H1 (cell line): ENCODE measurements at regions of chr19 and their contacts with region 1.

Region 1: GRCh38 chr19:1592755-1593500 is at the start of gene MBD3:
- DNase-seq: peak; percentile 88 to 93
- H3K4me3 ChIP-seq: peak within 1 kb of the TSS; percentile 82 to 93 (median 90)
- H3K27ac ChIP-seq: peak within 1 kb of the TSS; percentile 98
- H3K4me1 ChIP-seq: peaks cover 0 to 8% (median 6%) of the 10 kb centered on the region in 4 experiments; a peak in 6 of 7 replicates
- H3K27me3 ChIP-seq: no peaks in the 10 kb centered on the region
- CTCF ChIP-seq: no peak
- EP300 ChIP-seq: peak in 1 of 2 experiments; percentile 95; a peak in 1 of 3 replicates
- POLR2A ChIP-seq: peak in 1 of 2 experiments; percentile 46; a peak in 1 of 3 replicates
- RAD21 ChIP-seq: no peak
- total RNA-seq, gene MBD3: 110 and 115 TPM in 2 replicates

Region 2: DNA sequence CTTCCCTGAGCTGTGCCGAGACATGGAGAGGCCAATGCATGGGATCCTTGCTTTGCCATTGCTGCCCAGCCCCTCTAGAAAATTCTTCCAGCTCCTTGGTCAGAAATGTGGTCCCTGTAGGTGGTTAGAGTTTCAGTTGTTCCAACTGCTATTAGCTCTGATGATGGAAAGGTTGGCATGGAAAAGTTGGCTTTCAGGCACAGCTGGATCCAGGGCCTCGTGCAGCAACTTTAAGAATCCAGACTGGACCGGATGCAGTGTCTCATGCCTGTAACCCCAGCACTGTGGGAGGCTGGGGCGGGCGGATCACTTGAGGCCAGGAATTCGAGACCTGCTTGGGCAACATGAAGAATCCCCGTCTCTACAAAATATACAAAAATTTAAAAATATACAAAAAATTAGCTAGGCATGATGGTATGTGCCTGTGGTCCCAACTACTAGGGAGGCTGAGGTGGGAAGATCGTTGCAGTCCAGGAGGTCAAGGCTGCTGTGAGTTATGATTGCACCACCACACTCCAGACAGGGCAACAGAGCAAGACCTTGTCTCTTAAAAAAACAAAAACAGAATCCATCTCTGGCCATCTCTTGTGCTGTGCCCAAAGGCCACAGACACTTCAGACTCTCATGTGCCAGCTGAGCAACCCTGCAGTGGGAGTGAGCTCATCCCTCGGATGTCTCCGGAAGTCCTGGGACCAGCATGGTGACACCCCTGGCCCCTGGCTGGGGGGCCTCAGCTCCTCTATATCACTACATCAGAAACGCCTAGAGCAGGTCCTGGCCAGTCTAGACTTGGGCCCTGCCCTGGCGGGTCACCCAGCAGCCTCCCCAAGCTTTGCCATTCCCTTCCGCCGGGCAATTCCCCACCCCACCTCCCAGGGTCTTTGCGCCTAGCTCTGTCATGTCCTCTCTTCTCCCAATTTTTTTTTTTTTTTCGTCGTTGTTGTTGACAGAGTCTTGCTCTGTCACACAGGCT is 41.6 kb before region 1 on chr19:
- CTCF ChIA-PET with region 1: interaction called, 19 read pairs
- POLR2A ChIA-PET with region 1: interaction called, 11 read pairs
- DNase-seq: no peak
- H3K4me3 ChIP-seq: no peak overlapping the region
- H3K27ac ChIP-seq: no peak overlapping the region
- H3K4me1 ChIP-seq: no peaks in the 10 kb centered on the region
- H3K27me3 ChIP-seq: no peaks in the 10 kb centered on the region
- CTCF ChIP-seq: no peak
- EP300 ChIP-seq: no peak
- POLR2A ChIP-seq: no peak
- RAD21 ChIP-seq: no peak

Region 3: GRCh38 chr19:1577090-1577928 is 15.6 kb before region 1 on chr19:
- CTCF ChIA-PET with region 1: interaction called, 25 read pairs
- POLR2A ChIA-PET with region 1: interaction called, 148 read pairs
- DNase-seq: no peak
- H3K4me3 ChIP-seq: no peak overlapping the region
- H3K27ac ChIP-seq: no peak overlapping the region
- H3K4me1 ChIP-seq: no peaks in the 10 kb centered on the region
- H3K27me3 ChIP-seq: no peaks in the 10 kb centered on the region
- CTCF ChIP-seq: no peak
- EP300 ChIP-seq: no peak
- POLR2A ChIP-seq: no peak
- RAD21 ChIP-seq: no peak

Region 4: GRCh38 chr19:1605236-1606137 is 12.6 kb after region 1 on chr19 and contains the start of gene UQCR11:
- CTCF ChIA-PET with region 1: interaction called, 6 read pairs
- POLR2A ChIA-PET with region 1: interaction called, 38 read pairs
- DNase-seq: peak; percentile 79 to 90
- H3K4me3 ChIP-seq: peak within 1 kb of the TSS; percentile 64 to 86 (median 72)
- H3K27ac ChIP-seq: peak within 1 kb of the TSS; percentile 82
- H3K4me1 ChIP-seq: peaks cover 0 to 7% (median 3%) of the 10 kb centered on the region in 4 experiments; a peak in 6 of 7 replicates
- H3K27me3 ChIP-seq: no peaks in the 10 kb centered on the region
- CTCF ChIP-seq: peak; percentile 45 to 72 (median 50); a peak in 3 of 4 replicates
- EP300 ChIP-seq: no peak
- POLR2A ChIP-seq: peak in 1 of 2 experiments; percentile 49; a peak in 2 of 3 replicates
- RAD21 ChIP-seq: peak; percentile 66 to 73
- total RNA-seq, gene UQCR11: 162 and 179 TPM in 2 replicates

Region 5: DNA sequence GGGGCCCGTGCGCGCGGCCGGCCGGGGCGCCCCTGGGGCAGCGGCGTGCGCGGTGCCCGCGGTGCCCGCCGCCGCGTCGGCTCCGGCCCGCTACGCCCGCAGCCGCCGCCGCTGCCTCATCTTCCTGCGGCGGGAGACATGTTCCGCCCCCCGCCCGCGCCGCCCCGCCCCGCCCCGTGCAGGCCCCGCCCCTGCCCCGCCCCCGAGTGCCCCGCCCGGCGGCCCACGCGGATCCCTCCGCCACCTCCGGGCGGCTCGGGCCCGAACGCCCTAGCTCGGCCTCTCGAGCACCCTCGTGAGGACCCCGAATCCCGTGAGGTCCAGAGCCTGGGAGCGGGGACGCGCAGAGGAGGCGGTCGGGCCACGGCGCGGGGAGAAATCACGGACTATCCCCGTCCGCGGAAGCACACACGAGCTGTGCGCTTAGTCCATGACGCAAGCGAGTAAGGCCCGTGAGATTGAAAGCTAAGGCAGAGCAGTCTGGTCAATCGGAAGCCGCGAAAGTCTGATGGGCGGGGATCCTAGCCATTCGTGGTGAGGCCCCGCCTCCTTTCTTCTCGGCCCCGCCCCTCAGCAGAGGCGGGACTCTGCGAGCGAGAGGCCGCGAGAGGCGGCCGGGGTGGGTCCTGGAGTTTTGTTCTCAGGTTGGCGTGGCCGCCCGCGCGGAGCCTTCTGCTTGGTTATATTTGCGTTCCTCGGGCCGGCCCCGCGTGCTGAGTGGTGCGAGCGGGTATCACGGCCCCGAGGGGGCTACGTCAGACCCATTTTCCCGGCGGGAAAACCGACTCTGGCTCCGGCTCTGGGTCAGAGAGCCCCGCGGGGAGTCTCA is 59.8 kb after region 1 on chr19 and contains the start of gene TCF3:
- CTCF ChIA-PET with region 1: no interaction called
- POLR2A ChIA-PET with region 1: interaction called, 11 read pairs
- DNase-seq: peak; percentile 98
- H3K4me3 ChIP-seq: peak within 1 kb of the TSS; percentile 69 to 84 (median 74)
- H3K27ac ChIP-seq: peak within 1 kb of the TSS; percentile 100
- H3K4me1 ChIP-seq: peaks cover 0 to 20% (median 4%) of the 10 kb centered on the region in 4 experiments; a peak in 6 of 7 replicates
- H3K27me3 ChIP-seq: no peaks in the 10 kb centered on the region; a peak in 1 of 7 replicates
- CTCF ChIP-seq: no peak
- EP300 ChIP-seq: no peak
- POLR2A ChIP-seq: peak in 1 of 2 experiments; percentile 52; a peak in 2 of 3 replicates
- RAD21 ChIP-seq: no peak
- total RNA-seq, gene TCF3: 340 and 348 TPM in 2 replicates